ENCODE measurements at regions of chr9 and their contacts with region 1.

Region 1: GRCh38 chr9:20980832-20981455 is 50.5 kb downstream of the HACD4 start:
- DNase-seq: no peak
- ATAC-seq: peak; percentile 77
- H3K4me3 ChIP-seq: no peak overlapping the region
- H3K27ac ChIP-seq: peak overlapping the region; percentile 52 to 84
- H3K4me1 ChIP-seq: peaks cover 0 to 5% of the 10 kb centered on the region in 2 donors
- H3K27me3 ChIP-seq: no peaks in the 10 kb centered on the region

Region 2: DNA sequence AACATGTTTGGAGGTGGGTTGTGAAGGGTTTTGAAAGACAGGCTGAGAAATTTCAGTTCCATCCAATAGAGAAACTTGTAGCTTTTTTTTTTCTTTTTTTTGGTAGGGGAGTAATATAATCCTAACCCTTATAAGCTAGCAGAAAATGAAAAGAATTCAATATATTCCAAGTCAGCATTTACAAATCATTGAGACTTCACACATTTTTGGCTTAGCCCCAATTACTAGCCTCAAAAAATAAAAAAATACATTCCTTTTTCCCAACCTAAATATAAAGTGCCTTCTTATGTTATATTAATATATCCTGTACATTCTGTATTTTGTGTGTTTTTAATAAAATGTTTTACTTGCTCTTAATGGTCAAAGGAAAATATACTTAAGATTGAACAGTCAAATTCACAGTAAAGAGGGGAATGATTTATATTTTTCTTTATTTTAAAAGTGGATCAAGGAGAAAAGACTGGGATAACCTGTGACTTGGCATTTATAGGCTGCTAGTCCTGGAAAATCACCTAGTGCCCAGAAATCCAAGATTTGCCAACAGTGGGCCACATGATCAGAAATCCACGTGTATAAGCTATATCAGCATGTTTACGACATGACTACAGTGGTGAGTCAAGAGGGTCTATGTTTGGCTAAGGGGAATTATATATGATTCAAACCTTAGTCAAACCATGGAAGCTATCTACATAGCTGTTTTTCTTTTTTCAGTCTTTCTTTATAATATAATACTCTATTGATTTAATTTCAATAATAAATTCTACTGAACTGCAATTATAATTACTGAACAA is 36.0 kb after region 1 on chr9:
- intact Hi-C with region 1: loop called in 1 of 2 experiments (anchors 5 kb)
- DNase-seq: no peak
- ATAC-seq: no peak
- H3K4me3 ChIP-seq: no peak overlapping the region
- H3K27ac ChIP-seq: no peak overlapping the region
- H3K4me1 ChIP-seq: no peaks in the 10 kb centered on the region
- H3K27me3 ChIP-seq: no peaks in the 10 kb centered on the region

Region 3: DNA sequence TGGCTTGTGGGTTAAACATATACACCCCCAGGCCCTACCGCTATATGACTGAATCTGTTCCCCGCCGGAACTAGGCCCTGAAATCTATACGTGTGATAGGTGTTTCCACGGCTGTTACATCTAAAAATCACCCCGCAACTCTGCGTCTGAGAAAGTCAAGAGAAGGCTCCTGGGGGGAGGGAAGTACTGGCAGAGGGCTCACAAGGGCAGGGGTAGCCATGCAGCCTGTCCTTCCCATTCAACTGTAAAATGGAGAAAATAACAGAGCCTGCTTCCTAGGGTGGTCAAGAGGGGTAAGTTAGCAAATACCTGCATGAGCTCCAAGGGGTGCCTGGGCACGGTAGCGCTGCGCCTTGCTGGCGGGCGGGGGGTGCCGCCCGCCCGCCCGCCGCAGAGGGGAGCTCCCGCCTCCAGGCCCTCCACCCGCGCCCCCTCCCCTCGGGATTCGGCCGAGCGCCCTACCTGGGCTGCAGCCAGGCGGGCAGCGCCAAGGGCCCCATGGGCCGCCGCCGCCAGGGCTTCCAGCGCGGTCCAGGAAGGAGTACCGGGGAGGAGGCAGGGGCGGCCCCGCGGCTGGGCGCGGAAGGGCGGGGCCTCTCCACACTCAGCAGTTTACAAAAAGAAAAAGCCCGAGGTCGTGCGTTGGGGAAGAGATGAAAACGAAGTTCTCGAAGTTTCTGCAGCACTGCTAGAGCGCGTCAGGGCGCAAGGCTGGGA is 50.3 kb after region 1 on chr9 and contains the start of gene HACD4:
- intact Hi-C with region 1: loop called in 1 of 2 experiments (anchors 5 kb)
- DNase-seq: peak; percentile 80 to 85
- ATAC-seq: peak; percentile 91
- H3K4me3 ChIP-seq: peak within 1 kb of the TSS; percentile 15 to 21
- H3K27ac ChIP-seq: peak within 1 kb of the TSS; percentile 20 to 59
- H3K4me1 ChIP-seq: no peaks in the 10 kb centered on the region
- H3K27me3 ChIP-seq: no peaks in the 10 kb centered on the region
- total RNA-seq, gene HACD4: 3.2 to 6.8 TPM

Region 4: DNA sequence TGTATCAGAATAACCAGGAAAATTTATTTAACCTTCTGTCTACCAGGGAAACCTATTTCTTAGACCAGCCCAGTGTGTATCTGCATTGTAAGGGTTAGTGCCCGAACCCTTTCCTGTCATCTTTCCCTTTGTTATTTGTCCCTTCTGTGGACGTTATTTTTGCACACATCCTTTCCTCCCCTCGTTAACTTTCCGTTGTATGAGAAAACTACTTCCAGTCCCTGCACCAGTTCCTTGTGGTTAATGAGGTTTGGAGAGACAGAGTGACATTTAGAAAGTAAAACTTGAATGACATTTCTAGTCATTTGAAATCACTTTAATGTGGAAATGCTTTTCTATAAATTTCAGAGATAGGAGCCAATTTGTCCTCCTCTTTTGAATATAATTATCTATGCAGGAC is 101.1 kb after region 1 on chr9:
- intact Hi-C with region 1: loop called in 1 of 2 experiments (anchors 10 kb)
- DNase-seq: no peak
- ATAC-seq: no peak
- H3K4me3 ChIP-seq: no peak overlapping the region
- H3K27ac ChIP-seq: no peak overlapping the region
- H3K4me1 ChIP-seq: no peaks in the 10 kb centered on the region
- H3K27me3 ChIP-seq: no peaks in the 10 kb centered on the region

Region 5: DNA sequence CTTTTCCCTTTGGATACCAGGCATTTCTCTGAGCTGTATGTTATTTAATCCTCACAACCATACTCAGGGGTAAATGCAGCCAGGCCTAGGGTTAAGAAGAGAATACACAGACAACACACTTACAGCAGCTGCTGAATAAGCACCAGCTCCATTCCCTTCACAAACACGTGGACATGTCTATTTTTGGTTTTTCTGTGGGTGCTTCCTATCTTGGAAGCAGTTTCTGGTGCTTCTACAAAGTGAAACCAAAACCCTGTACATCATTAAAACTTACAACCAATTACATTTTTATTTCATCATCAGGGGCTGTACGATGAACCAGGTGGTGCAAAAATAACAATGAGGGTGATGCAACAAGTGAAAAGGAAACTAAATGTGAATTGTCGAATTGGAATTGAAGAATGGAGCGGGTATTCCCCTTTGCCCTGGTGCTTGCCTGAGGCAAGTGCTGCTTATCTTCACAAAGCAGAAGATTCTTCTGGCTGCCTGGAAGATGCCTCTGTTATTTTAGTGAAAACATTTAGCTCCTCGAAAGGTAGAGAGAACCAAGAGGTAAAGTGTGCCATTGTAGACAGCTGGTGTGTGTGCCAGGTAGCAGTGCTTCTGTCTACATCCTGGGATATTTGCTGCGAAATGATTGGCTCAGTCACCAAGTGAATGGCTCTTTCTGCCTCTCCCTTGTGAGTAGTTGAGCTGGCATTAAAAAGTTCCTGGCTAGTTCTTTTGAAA is 115.4 kb after region 1 on chr9:
- intact Hi-C with region 1: loop called in 1 of 2 experiments (anchors 5 kb)
- DNase-seq: no peak
- ATAC-seq: peak; percentile 74
- H3K4me3 ChIP-seq: peak overlapping the region in 1 of 2 donors; percentile 53
- H3K27ac ChIP-seq: peak overlapping the region; percentile 67 to 88
- H3K4me1 ChIP-seq: peaks cover 2 to 7% of the 10 kb centered on the region in 2 donors
- H3K27me3 ChIP-seq: no peaks in the 10 kb centered on the region

Measured in aorta (tissue), 5 donors.